Activated CD4-positive, alpha-beta T cell treated with anti-CD3 and anti-CD28 coated beads, Interleukin-2, amount 10 ng/mL, durations not matched to agents 24 days and 14 days (primary cell): ENCODE measurements at regions of chrX and their contacts with region 1.

Region 1: GRCh38 chrX:40933132-40933705 is 152.0 kb upstream of the USP9X start:
- DNase-seq: peak; percentile 72
- H3K4me3 Mint-ChIP-seq: peak overlapping the region; percentile 79
- H3K27ac Mint-ChIP-seq: peak overlapping the region; percentile 95
- H3K4me1 Mint-ChIP-seq: peaks cover 18% of the 10 kb centered on the region
- H3K27me3 Mint-ChIP-seq: no peaks in the 10 kb centered on the region

Region 2: GRCh38 chrX:41010188-41010846 is 77.1 kb after region 1 on chrX:
- intact Hi-C with region 1: loop called (anchors 5 kb)
- DNase-seq: peak; percentile 88
- H3K4me3 Mint-ChIP-seq: peak overlapping the region; percentile 69
- H3K27ac Mint-ChIP-seq: peak overlapping the region; percentile 88
- H3K4me1 Mint-ChIP-seq: peaks cover 19% of the 10 kb centered on the region
- H3K27me3 Mint-ChIP-seq: no peaks in the 10 kb centered on the region